ENCODE measurements at regions of chr10 and their contacts with region 1.

Region 1: GRCh38 chr10:95841661-95842498 is 65.9 kb upstream of the CC2D2B start:
- DNase-seq: no peak
- H3K4me3 ChIP-seq: no peak overlapping the region
- H3K27me3 ChIP-seq: no peaks in the 10 kb centered on the region; the same call in 1 of the 2 replicates
- CTCF ChIP-seq: peak; percentile 50

Region 2: DNA sequence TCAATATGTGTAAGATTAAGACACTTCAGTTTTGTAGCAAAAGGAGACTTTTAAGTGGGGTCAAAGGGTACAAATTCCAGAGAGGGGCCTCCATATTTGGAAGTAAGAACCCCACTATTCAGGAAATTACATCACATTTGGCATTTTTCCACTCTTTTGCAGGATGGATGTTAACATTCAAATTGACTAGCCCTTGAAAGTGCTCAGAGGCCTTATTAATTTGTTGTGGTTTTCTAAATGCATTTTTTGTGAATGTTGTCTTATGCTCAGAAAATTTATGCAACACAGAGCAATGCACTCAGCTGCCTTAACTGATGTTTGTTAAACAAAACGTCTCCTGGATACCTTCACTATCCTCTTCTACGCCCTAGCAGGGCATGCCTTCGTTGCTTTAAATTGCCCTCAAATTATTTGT is 500.2 kb before region 1 on chr10:
- CTCF ChIA-PET with region 1: no interaction called
- POLR2A ChIA-PET with region 1: no interaction called
- DNase-seq: peak; percentile 56
- H3K4me3 ChIP-seq: no peak overlapping the region
- H3K27me3 ChIP-seq: no peaks in the 10 kb centered on the region
- CTCF ChIP-seq: no peak

Region 3: DNA sequence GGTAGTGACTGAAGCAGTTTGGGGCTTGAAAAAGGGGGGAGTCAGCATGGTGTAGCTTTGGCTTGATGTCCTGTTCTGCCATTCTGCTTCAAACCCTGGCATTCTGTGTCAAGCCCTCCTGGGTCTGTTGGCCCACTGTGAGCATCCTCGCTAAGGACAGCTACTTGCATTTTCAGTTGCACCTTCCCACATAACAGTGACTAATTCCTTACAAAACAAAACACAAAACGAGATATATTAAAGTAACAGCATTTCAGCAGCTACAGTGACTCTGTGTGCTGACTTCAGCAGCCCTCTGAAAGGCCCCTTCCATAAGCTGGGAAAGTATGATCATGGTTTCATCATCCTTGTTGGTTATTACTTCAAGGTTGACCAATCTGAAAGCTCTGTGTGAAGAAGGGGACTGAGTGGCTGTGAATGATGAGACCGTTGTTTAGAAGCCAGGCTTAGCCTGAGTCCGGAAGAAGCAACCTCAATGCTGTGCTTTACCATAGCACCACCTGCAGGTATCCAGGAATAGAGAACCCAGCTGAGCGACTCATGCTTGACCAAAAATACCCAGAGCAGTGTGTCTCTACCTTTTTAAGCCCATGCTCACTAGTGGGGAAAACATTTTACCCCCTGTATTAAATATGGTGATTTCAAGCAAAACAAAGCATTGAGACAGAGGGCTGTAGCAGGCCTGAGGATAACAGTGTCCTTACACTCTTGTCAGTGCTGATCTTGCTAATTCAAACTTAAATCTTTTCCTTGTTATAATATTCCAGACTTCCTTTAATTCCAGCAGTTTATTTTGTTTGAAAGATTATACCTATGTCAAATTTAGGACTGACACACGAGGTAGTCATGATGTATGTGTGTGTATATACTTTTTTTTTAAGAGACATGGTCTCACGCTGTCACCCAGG is 23.3 kb after region 1 on chr10:
- CTCF ChIA-PET with region 1: interaction called, 32 read pairs
- POLR2A ChIA-PET with region 1: no interaction called
- DNase-seq: peak; percentile 35
- H3K4me3 ChIP-seq: no peak overlapping the region
- H3K27me3 ChIP-seq: no peaks in the 10 kb centered on the region
- CTCF ChIP-seq: peak; percentile 81

Region 4: DNA sequence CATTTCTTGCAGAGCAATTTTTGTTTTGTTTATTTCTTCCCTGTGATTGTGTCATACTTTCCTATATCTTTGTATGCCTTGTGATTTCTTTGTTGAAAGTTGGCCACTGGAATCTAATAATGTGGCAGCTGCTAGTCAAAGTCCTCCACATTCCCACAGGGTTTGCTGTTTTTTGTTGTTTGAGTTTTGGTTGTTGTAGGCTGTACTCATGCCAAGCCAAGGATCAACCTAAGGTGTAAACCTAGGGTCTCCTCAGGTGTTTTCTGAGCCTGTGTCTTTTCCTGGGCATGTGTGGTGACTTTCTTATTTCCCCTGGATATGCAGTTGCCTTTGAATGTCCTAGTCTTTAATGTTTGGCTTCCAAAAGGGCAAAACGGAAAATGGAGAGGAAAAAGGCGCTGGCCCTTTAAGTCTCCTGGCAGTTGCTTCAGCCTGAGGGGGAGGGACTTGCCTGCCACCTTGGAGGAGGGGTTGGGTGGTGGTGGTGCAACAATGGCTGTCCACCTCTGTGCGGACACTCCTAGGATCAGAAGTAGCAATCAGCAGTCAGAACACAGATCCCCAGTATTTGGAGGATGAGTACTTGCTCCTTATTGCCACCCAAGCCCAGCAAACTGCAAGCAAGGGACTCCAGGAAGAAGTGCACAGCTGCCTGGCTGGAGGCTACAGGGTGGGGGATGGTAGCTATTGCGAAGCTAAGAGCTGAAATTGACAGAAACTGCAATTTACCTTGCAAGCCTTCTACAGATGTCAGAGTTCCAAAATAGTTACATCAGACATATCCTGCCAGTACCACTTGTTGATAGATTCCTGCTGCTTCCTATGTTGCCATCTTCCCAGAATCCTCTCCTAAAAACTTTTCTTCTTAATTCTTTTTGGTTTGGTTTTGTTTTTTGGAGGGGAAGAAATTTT is 282.6 kb after region 1 on chr10:
- CTCF ChIA-PET with region 1: no interaction called
- POLR2A ChIA-PET with region 1: no interaction called
- DNase-seq: no peak
- H3K4me3 ChIP-seq: peak overlapping the region; percentile 23; the same call in 1 of the 2 replicates
- H3K27me3 ChIP-seq: no peaks in the 10 kb centered on the region
- CTCF ChIP-seq: no peak

Measured in BJ (cell line).